Activated naive CD4-positive, alpha-beta T cell treated with anti-CD3 and anti-CD28 coated beads for 36 hours (primary cell): ENCODE measurements at regions of chr7 and their contacts with region 1.

Region 1: GRCh38 chr7:128455551-128456254 is at the start of gene HILPDA:
- DNase-seq: peak; percentile 96
- H3K4me3 Mint-ChIP-seq: peak within 1 kb of the TSS; percentile 96
- H3K27ac Mint-ChIP-seq: peak within 1 kb of the TSS; percentile 96
- H3K4me1 Mint-ChIP-seq: peaks cover 55% of the 10 kb centered on the region
- H3K27me3 Mint-ChIP-seq: peaks cover 8% of the 10 kb centered on the region
- total RNA-seq, gene HILPDA: 12.4 to 13.6 TPM

Region 2: GRCh38 chr7:127392566-127393367 is 1062.9 kb before region 1 on chr7 and contains the start of gene ZNF800:
- CTCF ChIA-PET with region 1: no interaction called
- intact Hi-C with region 1: loop called (anchors 10 kb)
- DNase-seq: peak; percentile 89
- H3K4me3 Mint-ChIP-seq: peak within 1 kb of the TSS; percentile 95
- H3K27ac Mint-ChIP-seq: peak within 1 kb of the TSS; percentile 93
- H3K4me1 Mint-ChIP-seq: peaks cover 61% of the 10 kb centered on the region
- H3K27me3 Mint-ChIP-seq: no peaks in the 10 kb centered on the region
- total RNA-seq, gene ZNF800: 18.2 to 19.5 TPM

Region 3: DNA sequence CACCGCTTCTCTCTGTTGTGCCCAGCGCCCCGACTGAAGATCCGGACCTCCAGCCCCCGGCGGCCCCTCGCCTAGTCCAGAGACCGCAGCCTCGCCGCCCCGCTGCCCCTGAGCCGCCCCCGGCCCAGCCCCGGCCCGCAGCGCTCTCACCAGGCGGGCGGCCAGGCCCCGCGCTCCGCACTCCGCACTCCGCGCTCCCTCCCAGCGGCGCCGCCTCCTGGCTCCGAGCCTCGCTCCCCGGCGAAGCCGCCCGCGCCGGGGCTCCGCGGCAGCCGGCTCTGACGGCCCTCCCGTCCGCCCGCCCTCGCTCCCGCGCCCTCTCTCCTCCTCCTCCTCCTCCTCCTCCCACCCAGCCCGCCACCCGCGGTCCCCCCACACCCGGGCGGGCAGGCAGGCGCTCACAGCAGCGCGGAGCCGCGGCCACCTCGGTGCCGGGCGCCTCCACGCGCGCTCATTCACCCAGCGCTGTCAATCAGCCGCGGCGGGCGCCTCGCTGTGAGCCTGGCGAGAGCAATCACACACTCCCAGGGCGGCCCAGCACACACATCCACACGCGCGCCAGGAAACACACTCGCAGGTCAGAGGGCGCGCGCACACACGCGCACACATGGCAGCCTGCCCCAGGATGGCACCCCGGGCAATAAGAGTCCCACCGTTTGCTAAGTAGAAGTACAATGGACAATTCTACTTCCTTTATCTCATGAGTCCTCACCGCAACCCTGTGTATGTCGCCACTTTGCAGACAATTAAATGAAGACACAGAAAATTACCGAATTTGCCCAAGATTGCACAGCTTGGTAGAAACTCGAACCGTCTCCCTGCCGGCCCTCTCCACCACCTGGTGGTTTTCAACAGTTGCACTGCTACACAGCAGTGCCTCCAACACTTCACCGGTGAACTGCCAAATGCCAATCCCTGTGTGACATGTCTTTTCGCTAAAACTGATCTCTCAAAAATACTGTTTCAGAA is 94.0 kb before region 1 on chr7 and contains the start of gene PRRT4:
- CTCF ChIA-PET with region 1: interaction called, 3 read pairs
- intact Hi-C with region 1: loop called (anchors 1 kb)
- DNase-seq: peak; percentile 42
- H3K4me3 Mint-ChIP-seq: peak within 1 kb of the TSS; percentile 73
- H3K27ac Mint-ChIP-seq: no peak within 1 kb of the TSS
- H3K4me1 Mint-ChIP-seq: peaks cover 22% of the 10 kb centered on the region
- H3K27me3 Mint-ChIP-seq: peaks cover 46% of the 10 kb centered on the region
- total RNA-seq, gene PRRT4: 0.40 TPM in 1 of 2 experiments, not detected in the other

Region 4: DNA sequence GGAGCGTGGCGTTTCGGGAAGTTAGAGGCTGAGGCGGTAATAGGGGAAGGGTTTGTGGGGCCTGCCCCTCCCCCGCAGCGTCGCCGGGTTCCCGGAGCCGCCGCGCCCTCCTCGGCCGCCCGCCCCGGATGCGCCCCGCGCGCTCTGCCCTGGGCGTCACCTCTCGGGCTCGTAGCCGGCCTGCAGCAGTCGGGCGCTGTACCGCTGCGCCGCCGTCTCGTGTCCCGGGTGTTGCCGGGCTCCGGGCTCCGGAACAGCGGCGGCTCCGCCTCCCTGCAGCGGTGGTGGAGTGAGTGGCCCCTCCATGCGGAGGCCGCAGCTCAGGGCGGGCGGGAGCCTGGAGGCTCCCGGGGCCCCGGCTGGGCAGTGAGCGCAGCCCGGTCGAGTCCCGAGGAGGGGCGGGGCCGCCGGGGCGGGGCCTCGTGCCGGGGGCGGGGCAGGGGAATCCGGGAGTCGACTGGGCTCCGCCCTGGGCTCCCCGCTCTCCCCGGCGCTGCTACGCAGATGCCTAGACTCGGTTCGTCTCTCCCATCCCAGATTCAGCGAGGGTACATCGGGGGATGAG is 46.0 kb before region 1 on chr7 and contains the start of gene IMPDH1:
- CTCF ChIA-PET with region 1: interaction called, 12 read pairs
- intact Hi-C with region 1: loop called (anchors 1 kb)
- DNase-seq: peak; percentile 86
- H3K4me3 Mint-ChIP-seq: peak within 1 kb of the TSS; percentile 85
- H3K27ac Mint-ChIP-seq: peak within 1 kb of the TSS; percentile 47
- H3K4me1 Mint-ChIP-seq: peaks cover 20% of the 10 kb centered on the region
- H3K27me3 Mint-ChIP-seq: peaks cover 2% of the 10 kb centered on the region
- total RNA-seq, gene IMPDH1: 44.3 to 45.9 TPM

Region 5: GRCh38 chr7:128437426-128438332 is 18.0 kb before region 1 on chr7:
- CTCF ChIA-PET with region 1: interaction called, 251 read pairs
- intact Hi-C with region 1: no loop called
- DNase-seq: no peak
- H3K4me3 Mint-ChIP-seq: no peak overlapping the region
- H3K27ac Mint-ChIP-seq: no peak overlapping the region
- H3K4me1 Mint-ChIP-seq: no peaks in the 10 kb centered on the region
- H3K27me3 Mint-ChIP-seq: no peaks in the 10 kb centered on the region

Region 6: GRCh38 chr7:128530855-128531104 is 75.1 kb after region 1 on chr7:
- CTCF ChIA-PET with region 1: interaction called, 3 read pairs
- intact Hi-C with region 1: loop called (anchors 1 kb)
- DNase-seq: no peak
- H3K4me3 Mint-ChIP-seq: no peak overlapping the region
- H3K27ac Mint-ChIP-seq: no peak overlapping the region
- H3K4me1 Mint-ChIP-seq: peaks cover 32% of the 10 kb centered on the region
- H3K27me3 Mint-ChIP-seq: no peaks in the 10 kb centered on the region

Region 7: GRCh38 chr7:128862571-128863432 is 407.1 kb after region 1 on chr7 and contains the start of gene ATP6V1F:
- CTCF ChIA-PET with region 1: no interaction called
- intact Hi-C with region 1: loop called (anchors 1 kb)
- DNase-seq: peak; percentile 99
- H3K4me3 Mint-ChIP-seq: peak within 1 kb of the TSS; percentile 91
- H3K27ac Mint-ChIP-seq: peak within 1 kb of the TSS; percentile 84
- H3K4me1 Mint-ChIP-seq: peaks cover 15% of the 10 kb centered on the region
- H3K27me3 Mint-ChIP-seq: no peaks in the 10 kb centered on the region
- total RNA-seq, gene ATP6V1F: 129 to 142 TPM